HEK293 (cell line): ENCODE measurements at regions of chr12 and their contacts with region 1.

Region 1: DNA sequence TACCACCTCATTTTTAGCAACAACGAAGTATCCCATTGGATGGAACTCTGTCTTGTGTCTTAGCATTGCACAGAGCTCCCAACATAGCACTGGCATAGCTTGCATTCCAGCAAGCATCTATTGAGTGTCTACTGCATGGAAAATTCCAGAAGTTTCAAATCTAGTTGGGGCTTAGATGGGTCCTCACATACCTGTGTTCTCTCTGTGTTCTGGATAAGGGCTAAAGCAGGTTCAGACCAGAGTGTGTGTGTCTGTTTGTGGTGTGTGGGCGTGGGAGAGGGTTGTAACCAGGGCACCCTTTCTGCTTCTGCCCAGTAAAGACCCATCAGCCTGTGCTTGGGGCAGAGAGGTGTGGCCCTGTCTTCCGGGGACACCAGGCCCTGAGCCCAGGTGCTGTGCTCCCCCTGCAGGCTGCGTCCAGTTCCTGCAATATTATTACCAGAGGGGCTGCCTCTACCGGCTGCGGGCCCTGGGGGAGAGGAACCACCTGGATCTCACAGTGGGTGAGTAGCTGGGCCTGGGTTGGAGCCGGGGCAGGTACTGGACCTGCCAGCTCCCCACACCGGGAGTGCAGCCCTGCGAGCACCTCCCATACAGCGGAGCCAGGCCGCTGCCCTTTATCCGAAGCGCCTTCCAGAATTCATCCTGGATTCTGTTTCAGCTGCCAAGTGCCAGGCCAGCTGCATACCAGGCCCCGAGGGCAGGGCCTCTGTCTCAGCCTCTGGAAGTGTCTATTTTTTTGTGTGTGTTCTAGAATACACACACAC is 20.3 kb downstream of the RHOF start:
- H3K4me3 ChIP-seq: no peak overlapping the region
- H3K27ac ChIP-seq: no peak overlapping the region
- H3K4me1 ChIP-seq: no peaks in the 10 kb centered on the region
- CTCF ChIP-seq: peak; percentile 76

Region 2: DNA sequence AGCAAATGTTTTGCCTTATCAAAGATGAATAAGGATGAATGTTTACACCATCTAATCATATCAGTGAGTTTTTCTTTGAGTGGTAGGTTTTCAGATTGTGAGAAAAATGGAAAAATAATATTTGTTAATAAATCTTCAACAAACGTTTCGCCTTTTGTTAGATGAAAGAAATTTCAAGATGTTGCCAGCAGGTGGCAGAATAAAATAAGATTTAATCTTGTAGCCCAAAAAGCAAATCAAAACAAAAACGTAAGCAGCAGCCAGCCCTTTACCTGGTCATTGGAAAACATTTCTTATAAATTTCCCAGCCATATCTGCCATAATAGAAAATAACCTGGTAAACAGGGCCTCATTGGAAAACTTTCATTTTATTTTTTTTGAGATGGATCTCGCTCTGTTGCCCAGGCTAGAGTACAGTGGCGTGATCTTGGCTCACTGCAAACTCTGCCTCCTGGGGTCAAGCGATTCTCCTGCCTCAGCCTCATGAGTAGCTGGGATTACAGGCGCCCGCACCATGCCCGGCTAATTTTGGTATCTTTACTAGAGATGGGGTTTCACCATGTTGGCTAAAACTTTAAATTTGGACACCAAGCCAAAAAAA is 76.0 kb before region 1 on chr12:
- CTCF ChIA-PET with region 1: interaction called, 40 read pairs
- POLR2A ChIA-PET with region 1: no interaction called
- H3K4me3 ChIP-seq: no peak overlapping the region
- H3K27ac ChIP-seq: no peak overlapping the region
- H3K4me1 ChIP-seq: no peaks in the 10 kb centered on the region
- CTCF ChIP-seq: 0 out of 2 replicates have a peak, but pooled peaks have one; percentile 31

Region 3: GRCh38 chr12:121712461-121713256 is 60.5 kb before region 1 on chr12 and contains the start of gene TMEM120B:
- CTCF ChIA-PET with region 1: interaction called, 21 read pairs
- POLR2A ChIA-PET with region 1: interaction called, 3 read pairs
- H3K4me3 ChIP-seq: peak within 1 kb of the TSS; percentile 75
- H3K27ac ChIP-seq: peak within 1 kb of the TSS; percentile 67; the same call in 1 of the 2 replicates
- H3K4me1 ChIP-seq: no peaks in the 10 kb centered on the region
- CTCF ChIP-seq: peak; percentile 85

Region 4: GRCh38 chr12:121719926-121720414 is 53.2 kb before region 1 on chr12:
- CTCF ChIA-PET with region 1: interaction called, 11 read pairs
- POLR2A ChIA-PET with region 1: no interaction called
- H3K4me3 ChIP-seq: no peak overlapping the region
- H3K27ac ChIP-seq: no peak overlapping the region
- H3K4me1 ChIP-seq: no peaks in the 10 kb centered on the region
- CTCF ChIP-seq: no peak

Region 5: GRCh38 chr12:121741743-121742142 is 31.5 kb before region 1 on chr12:
- CTCF ChIA-PET with region 1: interaction called, 10 read pairs
- POLR2A ChIA-PET with region 1: no interaction called
- H3K4me3 ChIP-seq: no peak overlapping the region
- H3K27ac ChIP-seq: no peak overlapping the region
- H3K4me1 ChIP-seq: peaks cover 4% of the 10 kb centered on the region; the same call in 1 of the 2 replicates
- CTCF ChIP-seq: no peak

Region 6: GRCh38 chr12:121823101-121823726 is 50.0 kb after region 1 on chr12:
- CTCF ChIA-PET with region 1: no interaction called
- POLR2A ChIA-PET with region 1: no interaction called
- H3K4me3 ChIP-seq: no peak overlapping the region
- H3K27ac ChIP-seq: no peak overlapping the region
- H3K4me1 ChIP-seq: no peaks in the 10 kb centered on the region
- CTCF ChIP-seq: no peak

Region 7: DNA sequence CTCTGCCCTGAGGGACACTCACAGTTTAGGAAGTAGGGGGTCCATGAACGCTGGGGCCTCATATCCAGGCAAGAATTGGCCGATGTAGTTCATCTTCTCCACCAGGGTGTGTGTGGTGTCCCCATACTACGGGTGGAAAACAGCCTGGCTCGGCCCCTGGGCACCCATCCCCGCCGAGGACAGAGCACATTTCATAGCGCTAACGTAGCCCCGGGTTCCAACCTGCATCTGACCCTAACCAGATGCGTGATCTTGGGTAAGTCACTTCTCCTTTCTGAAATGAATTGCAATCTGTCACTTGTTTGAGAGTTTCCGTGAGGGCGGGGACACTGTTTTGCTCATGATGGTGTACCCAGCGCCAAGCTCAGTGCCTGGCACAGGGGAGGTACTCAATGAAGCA is 76.5 kb after region 1 on chr12:
- CTCF ChIA-PET with region 1: no interaction called
- POLR2A ChIA-PET with region 1: no interaction called
- H3K4me3 ChIP-seq: no peak overlapping the region
- H3K27ac ChIP-seq: no peak overlapping the region
- H3K4me1 ChIP-seq: no peaks in the 10 kb centered on the region
- CTCF ChIP-seq: no peak

Region 8: GRCh38 chr12:121908702-121909101 is 135.5 kb after region 1 on chr12:
- CTCF ChIA-PET with region 1: no interaction called
- POLR2A ChIA-PET with region 1: no interaction called
- H3K4me3 ChIP-seq: no peak overlapping the region
- H3K27ac ChIP-seq: no peak overlapping the region
- H3K4me1 ChIP-seq: no peaks in the 10 kb centered on the region
- CTCF ChIP-seq: no peak